ENCODE measurements at regions of chr9 and their contacts with region 1.

Region 1: DNA sequence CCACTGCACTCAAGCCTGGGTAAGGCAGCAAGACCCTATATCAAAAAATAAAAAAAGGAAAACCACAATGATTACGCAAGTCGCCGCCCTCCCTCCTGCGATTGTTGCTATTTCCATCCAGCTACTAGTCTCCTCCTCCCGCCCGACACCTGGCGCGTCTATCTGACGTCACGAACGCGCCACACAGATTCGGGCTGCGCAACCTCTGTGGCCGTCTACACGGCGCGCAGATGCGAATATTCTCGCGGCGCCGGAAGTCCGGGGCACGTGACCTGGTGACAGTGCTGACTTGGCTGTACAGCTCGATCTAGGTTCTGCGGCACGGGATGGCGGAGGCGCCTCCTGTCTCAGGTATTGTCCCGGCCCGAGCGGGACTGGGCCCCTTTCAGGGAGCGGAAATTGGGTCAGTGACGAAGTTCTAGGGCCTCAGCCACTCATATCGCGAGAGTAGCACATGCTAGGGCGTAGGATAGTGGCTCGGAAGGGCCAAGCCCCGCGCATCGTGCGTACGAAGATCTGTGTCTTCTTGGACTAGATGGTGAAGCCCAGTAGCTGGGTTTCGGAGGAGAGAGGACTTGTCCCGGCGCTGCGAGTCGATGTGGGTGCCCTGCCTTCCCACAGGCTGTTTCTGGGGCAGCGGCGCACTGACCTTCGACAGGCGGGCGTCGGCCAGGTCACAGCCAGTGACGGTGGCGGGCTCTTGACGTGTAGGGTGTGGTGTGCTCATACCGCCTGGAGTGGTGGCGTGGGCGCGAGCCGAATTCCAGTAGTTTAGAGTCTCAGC is at the start of gene NFX1:
- DNase-seq: peak; percentile 97
- H3K4me3 ChIP-seq: peak within 1 kb of the TSS; percentile 97
- H3K27ac ChIP-seq: peak within 1 kb of the TSS; percentile 100
- H3K27me3 ChIP-seq: no peaks in the 10 kb centered on the region
- CTCF ChIP-seq: no peak
- polyA plus RNA-seq, gene NFX1: 35.9 and 39.2 TPM in 2 replicates

Region 2: GRCh38 chr9:33273972-33274328 is 16.5 kb before region 1 on chr9:
- CTCF ChIA-PET with region 1: interaction called, 11 read pairs
- POLR2A ChIA-PET with region 1: interaction called, 4 read pairs
- DNase-seq: no peak
- H3K4me3 ChIP-seq: no peak overlapping the region
- H3K27ac ChIP-seq: no peak overlapping the region
- H3K27me3 ChIP-seq: no peaks in the 10 kb centered on the region
- CTCF ChIP-seq: no peak

Region 3: DNA sequence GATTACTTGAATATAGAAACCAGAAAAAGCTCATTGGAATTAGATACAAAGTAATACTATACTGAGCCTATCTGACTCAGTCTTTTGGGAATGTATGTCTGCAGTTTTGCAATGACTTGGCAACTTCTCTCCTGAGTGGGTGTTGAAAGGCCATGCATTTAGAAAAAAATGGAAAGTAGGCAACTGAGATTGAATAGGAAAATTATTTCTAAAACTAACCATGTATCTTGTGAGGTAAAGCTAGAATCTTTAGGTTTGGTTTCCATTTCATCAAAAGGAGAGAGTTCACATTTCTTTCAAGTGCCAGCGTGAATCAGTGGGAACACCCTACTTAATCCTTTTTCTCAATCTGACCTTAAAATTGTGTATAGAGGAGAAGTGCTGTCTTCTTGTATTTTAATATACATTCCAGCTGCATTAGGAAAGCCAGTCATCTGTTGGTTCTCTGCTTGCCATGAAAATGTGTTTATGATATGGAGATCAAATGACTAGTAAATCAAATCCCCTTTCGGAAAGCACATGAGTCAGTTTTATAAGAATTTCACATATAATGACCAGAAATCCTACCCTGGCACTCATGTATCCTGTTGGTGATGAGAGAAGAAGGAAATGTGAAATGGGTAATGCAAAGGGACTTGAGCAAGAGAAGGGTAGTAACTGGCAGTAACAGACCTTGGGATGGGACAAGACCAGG is 30.3 kb after region 1 on chr9:
- CTCF ChIA-PET with region 1: no interaction called
- POLR2A ChIA-PET with region 1: interaction called, 37 read pairs
- DNase-seq: peak; percentile 90
- H3K4me3 ChIP-seq: no peak overlapping the region
- H3K27ac ChIP-seq: peak overlapping the region; percentile 96
- H3K27me3 ChIP-seq: no peaks in the 10 kb centered on the region
- CTCF ChIP-seq: no peak

Region 4: DNA sequence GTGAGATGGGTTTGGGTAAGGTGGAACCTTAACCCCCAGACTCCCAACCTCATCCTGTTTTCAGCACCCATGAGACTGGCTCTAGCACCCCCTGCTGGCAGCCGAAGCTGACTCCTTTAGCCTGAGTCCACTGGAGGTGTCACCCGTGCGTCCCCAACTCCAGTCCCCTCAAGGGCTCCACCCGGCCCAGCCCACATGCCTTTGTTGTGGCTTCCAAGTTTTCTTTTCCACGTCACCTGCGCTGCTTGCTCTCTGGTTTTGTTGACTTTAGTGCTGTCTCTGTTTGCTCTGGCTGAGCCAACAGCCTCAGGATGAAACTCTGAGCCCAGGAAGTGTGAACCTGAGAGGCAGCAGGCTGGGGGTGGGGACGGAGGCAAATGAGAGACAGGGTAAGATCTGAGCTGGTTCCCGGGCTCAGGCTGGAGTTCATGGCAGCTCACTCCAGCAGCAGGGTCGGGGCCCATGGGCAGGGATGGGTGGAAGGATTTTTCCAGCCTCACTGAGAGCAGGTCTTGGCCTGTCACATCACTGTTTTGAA is 125.1 kb after region 1 on chr9:
- CTCF ChIA-PET with region 1: interaction called, 30 read pairs
- POLR2A ChIA-PET with region 1: interaction called, 3 read pairs
- DNase-seq: no peak
- H3K4me3 ChIP-seq: no peak overlapping the region
- H3K27ac ChIP-seq: no peak overlapping the region
- H3K27me3 ChIP-seq: peaks cover 18% of the 10 kb centered on the region
- CTCF ChIP-seq: peak; percentile 74

Region 5: DNA sequence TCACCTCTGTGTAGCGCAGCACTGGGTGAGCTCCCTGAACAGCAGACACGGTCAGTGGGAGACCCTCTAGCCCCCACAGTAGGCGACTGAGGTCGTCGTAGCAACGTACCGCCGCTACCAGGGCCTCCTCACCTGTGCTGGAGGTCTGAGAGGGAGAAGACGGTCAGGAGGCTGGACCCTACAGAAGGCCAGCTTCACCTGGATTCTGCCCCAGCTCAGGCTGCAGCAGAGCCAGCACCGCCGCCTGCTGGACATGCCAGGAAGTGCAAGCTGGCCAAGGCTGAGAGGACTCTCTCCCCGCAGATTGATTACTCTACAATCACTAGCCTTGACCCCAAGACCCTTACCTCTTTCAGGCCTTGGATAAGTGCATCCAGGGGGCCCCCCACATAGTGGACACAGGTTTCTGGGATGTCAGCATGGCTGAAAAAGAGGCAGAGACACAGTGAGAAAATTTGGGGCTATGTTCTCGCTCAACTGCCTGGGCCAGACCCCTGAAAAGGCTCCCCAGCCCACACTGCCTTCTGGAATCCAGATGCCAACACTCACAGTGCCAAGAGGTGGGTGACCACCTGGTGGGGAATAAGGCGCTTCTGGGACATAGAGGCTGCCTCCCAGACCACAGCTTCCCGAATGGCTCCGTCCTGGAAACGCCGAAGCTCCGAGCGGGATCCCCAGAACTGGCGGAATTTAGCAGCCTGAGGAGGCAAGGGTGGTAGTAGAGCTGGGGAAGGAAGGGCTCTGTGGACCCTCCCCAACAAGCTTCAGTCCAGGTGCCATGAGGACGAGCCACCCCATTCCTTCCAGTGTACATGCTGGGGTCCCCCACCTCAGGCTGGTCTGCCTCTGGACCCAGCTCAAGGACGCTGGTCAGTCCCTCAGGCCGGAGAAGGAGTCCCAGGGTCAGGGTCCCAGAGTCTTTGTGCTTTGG is 176.4 kb after region 1 on chr9:
- CTCF ChIA-PET with region 1: interaction called, 24 read pairs
- POLR2A ChIA-PET with region 1: interaction called, 4 read pairs
- DNase-seq: no peak
- H3K4me3 ChIP-seq: no peak overlapping the region
- H3K27ac ChIP-seq: no peak overlapping the region
- H3K27me3 ChIP-seq: no peaks in the 10 kb centered on the region
- CTCF ChIP-seq: peak; percentile 98

Region 6: GRCh38 chr9:33473643-33474352 is 183.4 kb after region 1 on chr9 and contains the start of gene NOL6:
- CTCF ChIA-PET with region 1: no interaction called
- POLR2A ChIA-PET with region 1: interaction called, 11 read pairs
- DNase-seq: peak; percentile 98
- H3K4me3 ChIP-seq: peak within 1 kb of the TSS; percentile 99
- H3K27ac ChIP-seq: peak within 1 kb of the TSS; percentile 52
- H3K27me3 ChIP-seq: no peaks in the 10 kb centered on the region
- CTCF ChIP-seq: no peak
- polyA plus RNA-seq, gene NOL6: 34.7 and 42.6 TPM in 2 replicates